Right ventricle myocardium superior (tissue), 1 donor: ENCODE measurements at regions of chr20 and their contacts with region 1.

Region 1: DNA sequence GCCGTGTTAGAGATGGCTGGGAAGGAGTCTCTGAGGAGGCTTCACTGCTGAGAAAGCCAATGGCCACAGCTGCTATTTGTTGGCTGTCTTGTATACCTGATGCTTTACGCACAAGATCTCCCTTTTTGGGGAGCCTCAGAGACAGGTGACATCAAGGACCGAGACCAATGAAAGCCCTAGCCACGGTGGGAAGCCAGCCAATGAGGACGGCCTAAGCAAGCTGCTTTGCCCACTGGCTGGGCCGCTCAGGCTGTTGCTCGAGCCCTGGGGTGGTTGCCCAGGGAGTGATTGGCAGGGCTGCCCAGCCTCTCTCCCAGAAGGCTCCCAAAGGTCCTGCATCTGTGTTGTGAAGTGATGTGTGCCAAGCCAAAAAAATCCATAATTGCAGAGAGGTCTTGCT is 4.5 kb downstream of the MMP24OS start:
- DNase-seq: peak; percentile 68
- ATAC-seq: no peak

Region 2: DNA sequence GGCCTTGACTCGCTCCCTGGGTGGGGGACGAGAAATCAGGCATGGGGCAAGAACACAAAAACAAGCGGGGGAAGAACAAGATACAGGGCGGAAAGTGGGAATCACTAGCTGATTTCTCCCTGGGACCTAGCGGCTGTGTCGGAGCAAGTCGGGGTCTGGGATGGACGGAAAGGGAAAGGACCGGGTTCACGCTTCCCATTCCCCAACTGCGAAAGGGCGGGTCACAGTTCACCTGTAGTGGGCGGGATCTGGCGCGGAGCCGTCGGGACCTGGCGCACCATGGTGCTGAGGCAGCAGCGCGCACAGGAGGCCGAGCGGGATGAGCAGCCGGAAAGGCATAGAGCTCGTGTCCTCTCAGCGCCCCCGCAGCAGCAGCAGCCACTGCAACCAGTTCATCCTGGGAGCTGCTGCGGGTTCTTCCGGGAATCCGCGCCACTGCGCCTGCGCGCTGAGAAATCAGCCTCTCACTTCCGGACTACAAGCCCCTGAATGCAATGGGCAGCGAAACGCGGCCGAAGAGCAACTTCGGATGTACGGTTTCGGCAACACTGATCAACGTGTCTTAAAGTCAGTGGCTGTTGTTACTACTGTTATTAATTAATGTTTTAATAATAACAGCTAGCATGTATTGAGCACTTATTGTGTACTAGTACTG is 126.4 kb before region 1 on chr20 and contains the start of gene EDEM2:
- intact Hi-C with region 1: loop called (anchors 5 kb)
- DNase-seq: peak; percentile 96
- ATAC-seq: peak; percentile 97
- total RNA-seq, gene EDEM2: 9.1 TPM

Region 3: GRCh38 chr20:35575970-35576623 is 302.6 kb after region 1 on chr20:
- intact Hi-C with region 1: no loop called
- DNase-seq: no peak
- ATAC-seq: no peak